ENCODE measurements at regions of chr1 and their contacts with region 1.

Region 1: GRCh38 chr1:199009447-199009846 is 370.6 kb downstream of the PTPRC start:
- DNase-seq: no peak
- ATAC-seq: no peak
- H3K4me3 ChIP-seq: no peak overlapping the region
- H3K4me1 ChIP-seq: no peaks in the 10 kb centered on the region
- CTCF ChIP-seq: no peak

Region 2: DNA sequence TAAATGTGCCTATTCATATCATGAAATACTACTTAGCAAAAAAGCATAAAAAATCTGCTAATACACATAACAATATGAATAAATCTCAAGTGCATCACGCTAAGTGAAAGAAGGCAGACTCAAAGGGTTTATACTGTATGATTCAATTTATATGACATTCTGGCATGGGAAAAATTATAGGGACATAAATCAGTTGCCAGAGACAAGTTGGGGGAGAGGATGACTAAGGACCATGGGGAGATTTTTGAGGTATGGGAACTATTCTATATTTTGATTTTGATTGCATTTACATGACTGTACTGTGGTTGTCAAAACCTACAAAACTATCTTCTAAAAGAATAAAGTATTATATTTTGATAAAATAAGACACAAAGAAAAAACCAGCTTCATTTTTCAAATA is 367.8 kb after region 1 on chr1:
- intact Hi-C with region 1: loop called in 1 of 2 experiments (anchors 10 kb)
- DNase-seq: no peak
- ATAC-seq: no peak
- H3K4me3 ChIP-seq: no peak overlapping the region
- H3K4me1 ChIP-seq: no peaks in the 10 kb centered on the region
- CTCF ChIP-seq: no peak